Calu3 (cell line): ENCODE measurements at regions of chr20 and their contacts with region 1.

Region 1: GRCh38 chr20:42604998-42605956 is 584.4 kb downstream of the PTPRT start:
- DNase-seq: peak; percentile 84
- H3K4me3 Mint-ChIP-seq: peak overlapping the region; percentile 50
- H3K27ac Mint-ChIP-seq: peak overlapping the region; percentile 94
- H3K4me1 Mint-ChIP-seq: peaks cover 44% of the 10 kb centered on the region
- H3K27me3 Mint-ChIP-seq: no peaks in the 10 kb centered on the region
- CTCF ChIP-seq: no peak

Region 2: GRCh38 chr20:42576191-42576590 is 29.1 kb before region 1 on chr20:
- CTCF ChIA-PET with region 1: no interaction called
- intact Hi-C with region 1: no loop called
- DNase-seq: no peak
- H3K4me3 Mint-ChIP-seq: no peak overlapping the region
- H3K27ac Mint-ChIP-seq: no peak overlapping the region
- H3K4me1 Mint-ChIP-seq: peaks cover 7% of the 10 kb centered on the region
- H3K27me3 Mint-ChIP-seq: no peaks in the 10 kb centered on the region
- CTCF ChIP-seq: no peak

Region 3: DNA sequence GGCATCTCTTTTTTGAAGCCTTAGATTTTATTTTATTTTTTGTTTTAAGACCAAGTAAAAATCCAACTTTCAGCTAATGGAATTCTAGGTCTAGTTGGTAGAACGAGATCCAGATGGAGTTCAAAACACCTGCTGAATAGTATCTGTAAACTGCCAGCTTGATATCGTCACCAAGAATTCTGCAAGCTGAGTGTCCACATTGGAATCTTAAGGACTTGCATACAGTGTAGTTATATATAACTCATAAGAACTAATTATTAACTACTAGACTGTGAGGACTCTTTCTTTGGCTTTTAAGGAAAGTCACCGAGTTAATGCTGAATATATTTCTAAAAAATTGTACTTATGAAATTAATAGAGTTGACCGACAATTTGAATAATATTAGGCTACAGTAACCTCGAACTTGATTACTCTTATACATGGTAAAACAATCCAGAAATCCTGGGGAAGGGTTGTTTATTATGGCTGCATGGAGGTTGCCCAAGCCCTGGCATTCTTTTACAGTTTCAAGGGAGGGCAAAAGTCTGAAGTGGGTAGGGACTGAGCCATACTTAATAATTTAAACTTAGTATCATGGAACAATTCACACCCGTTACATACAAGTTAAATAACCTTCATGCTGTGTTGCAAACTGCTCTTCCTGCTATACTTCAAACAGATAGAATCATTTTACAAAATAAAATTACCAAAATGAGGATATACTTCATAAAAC is 30.6 kb after region 1 on chr20:
- CTCF ChIA-PET with region 1: interaction called, 5 read pairs
- intact Hi-C with region 1: loop called (anchors 2 kb)
- DNase-seq: peak; percentile 8
- H3K4me3 Mint-ChIP-seq: no peak overlapping the region
- H3K27ac Mint-ChIP-seq: no peak overlapping the region
- H3K4me1 Mint-ChIP-seq: peaks cover 28% of the 10 kb centered on the region
- H3K27me3 Mint-ChIP-seq: no peaks in the 10 kb centered on the region
- CTCF ChIP-seq: no peak

Region 4: GRCh38 chr20:42938441-42939205 is 333.3 kb after region 1 on chr20:
- CTCF ChIA-PET with region 1: no interaction called
- intact Hi-C with region 1: loop called (anchors 10 kb)
- DNase-seq: peak; percentile 71
- H3K4me3 Mint-ChIP-seq: no peak overlapping the region
- H3K27ac Mint-ChIP-seq: peak overlapping the region; percentile 23
- H3K4me1 Mint-ChIP-seq: peaks cover 24% of the 10 kb centered on the region
- H3K27me3 Mint-ChIP-seq: no peaks in the 10 kb centered on the region
- CTCF ChIP-seq: no peak